Naive thymus-derived CD4-positive, alpha-beta T cell (primary cell): ENCODE measurements at regions of chr1 and their contacts with region 1.

Region 1: GRCh38 chr1:193609592-193609991 is 423.2 kb upstream of the B3GALT2 start:
- DNase-seq: peak in 1 of 9 donors; percentile 7
- ATAC-seq: no peak
- H3K4me3 ChIP-seq: no peak overlapping the region
- H3K4me3 Mint-ChIP-seq: no peak overlapping the region
- H3K27ac ChIP-seq: no peak overlapping the region
- H3K27ac Mint-ChIP-seq: peak overlapping the region in 7 of 9 donors; percentile 3 to 72 (median 23)
- H3K4me1 ChIP-seq: no peaks in the 10 kb centered on the region
- H3K4me1 Mint-ChIP-seq: peaks cover 4 to 29% (median 11%) of the 10 kb centered on the region in 7 donors
- H3K27me3 ChIP-seq: no peaks in the 10 kb centered on the region
- H3K27me3 Mint-ChIP-seq: no peaks in the 10 kb centered on the region

Region 2: DNA sequence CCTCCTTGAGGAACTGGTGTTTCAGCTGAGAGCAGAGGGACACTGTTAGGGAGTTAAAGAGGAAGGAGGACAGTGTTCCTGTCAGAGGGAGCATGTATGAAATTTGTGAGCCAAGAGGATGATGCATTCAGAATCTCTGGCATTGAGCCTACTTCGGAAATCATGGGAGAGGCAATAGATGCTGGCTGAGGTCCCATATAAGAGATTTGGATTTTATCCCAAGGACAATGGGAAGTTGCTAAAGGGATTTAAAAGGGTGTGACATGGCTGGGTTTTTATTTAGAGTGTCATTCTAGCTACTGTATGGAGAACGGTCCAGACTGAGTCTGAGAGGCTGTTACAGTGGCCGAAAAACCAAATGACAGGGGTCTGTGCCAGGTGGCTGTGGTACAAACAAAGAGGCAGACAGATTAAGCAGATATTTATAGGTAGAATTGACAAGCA is 20.0 kb before region 1 on chr1:
- CTCF ChIA-PET with region 1: interaction called, 3 read pairs
- POLR2A ChIA-PET with region 1: interaction called, 3 read pairs
- intact Hi-C with region 1: loop called in 1 of 2 experiments (anchors 2 kb)
- DNase-seq: no peak
- ATAC-seq: no peak
- H3K4me3 ChIP-seq: no peak overlapping the region
- H3K4me3 Mint-ChIP-seq: no peak overlapping the region
- H3K27ac ChIP-seq: no peak overlapping the region
- H3K27ac Mint-ChIP-seq: peak overlapping the region in 1 of 9 donors; percentile 26
- H3K4me1 ChIP-seq: no peaks in the 10 kb centered on the region
- H3K4me1 Mint-ChIP-seq: peaks cover 5 to 34% (median 11%) of the 10 kb centered on the region in 7 donors
- H3K27me3 ChIP-seq: no peaks in the 10 kb centered on the region
- H3K27me3 Mint-ChIP-seq: no peaks in the 10 kb centered on the region